Activated T-helper 1 cell treated with anti-CD3 and anti-CD28 coated beads, Interleukin-12 subunit alpha, Interleukin-12 subunit beta, Interleukin-2, Interleukin-4 antibody, amounts not matched to agents 30 ng/mL and 10 ng/mL and 1 ng/mL, durations not matched to agents 14 hours and 24 hours and 36 hours (primary cell): ENCODE measurements at regions of chr18 and their contacts with region 1.

Region 1: DNA sequence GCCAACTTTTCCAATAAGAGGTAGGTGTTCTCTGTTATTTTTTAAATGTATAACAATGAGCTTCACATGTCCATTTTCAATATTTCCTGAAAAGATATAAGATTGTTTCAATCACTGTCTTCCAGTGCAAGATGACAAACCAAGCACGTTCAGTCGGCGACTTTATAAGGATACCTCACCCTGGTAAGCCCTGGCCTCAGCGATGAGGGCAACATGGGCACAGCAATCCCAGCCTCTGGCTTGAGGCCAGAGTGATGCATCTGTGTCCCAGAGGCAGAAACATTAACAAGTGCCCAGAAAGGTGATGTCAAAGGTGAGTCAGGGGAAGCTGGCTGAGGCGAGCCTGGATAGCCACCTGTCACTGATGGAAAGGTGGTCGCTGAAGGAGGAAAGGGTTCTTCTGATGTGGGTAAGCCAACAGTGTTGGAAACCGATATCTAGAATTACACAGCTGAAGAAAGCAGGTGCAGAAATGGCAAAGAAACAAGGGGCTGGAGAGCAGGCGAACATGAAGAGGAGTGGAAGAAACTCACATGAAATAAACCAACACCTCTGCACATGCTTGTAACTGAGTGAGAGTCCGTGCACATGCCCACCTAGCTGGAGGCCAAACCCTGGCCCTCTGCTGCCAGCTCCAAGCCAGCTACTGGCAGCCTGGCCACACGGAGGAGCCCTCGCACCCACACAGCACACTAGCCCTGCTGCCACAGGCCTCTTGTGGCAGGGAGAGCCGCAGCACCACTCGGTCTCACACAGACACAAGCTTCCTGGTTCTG is 65.5 kb downstream of the FBXO15 start:
- DNase-seq: peak; percentile 63
- H3K4me3 Mint-ChIP-seq: peak overlapping the region; percentile 85
- H3K27ac Mint-ChIP-seq: peak overlapping the region; percentile 97
- H3K4me1 Mint-ChIP-seq: peaks cover 24% of the 10 kb centered on the region
- H3K27me3 Mint-ChIP-seq: peaks cover 5% of the 10 kb centered on the region

Region 2: GRCh38 chr18:74040459-74041332 is 41.5 kb before region 1 on chr18:
- intact Hi-C with region 1: loop called (anchors 1 kb)
- DNase-seq: peak; percentile 62
- H3K4me3 Mint-ChIP-seq: no peak overlapping the region
- H3K27ac Mint-ChIP-seq: no peak overlapping the region
- H3K4me1 Mint-ChIP-seq: no peaks in the 10 kb centered on the region
- H3K27me3 Mint-ChIP-seq: no peaks in the 10 kb centered on the region

Region 3: DNA sequence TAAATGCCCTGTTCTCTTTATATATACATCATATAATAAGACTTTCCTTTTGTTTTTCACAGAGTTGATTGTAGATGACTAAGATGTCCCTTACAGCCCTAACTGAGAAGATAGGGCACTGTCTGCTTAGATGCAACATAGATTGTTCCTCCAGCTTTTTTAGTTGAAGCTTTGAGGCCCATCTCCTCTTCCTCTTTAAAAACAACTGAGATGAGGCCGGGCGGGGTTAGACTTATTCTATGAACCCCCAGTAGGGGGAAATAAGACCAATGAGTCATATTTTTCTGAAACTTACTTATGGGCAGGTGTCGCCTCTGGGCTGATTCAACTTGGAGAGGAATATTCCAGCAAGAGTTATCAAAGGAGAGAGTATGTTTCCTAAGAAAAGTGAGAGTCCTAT is 19.1 kb before region 1 on chr18:
- intact Hi-C with region 1: loop called (anchors 1 kb)
- DNase-seq: no peak
- H3K4me3 Mint-ChIP-seq: peak overlapping the region; percentile 19
- H3K27ac Mint-ChIP-seq: peak overlapping the region; percentile 77
- H3K4me1 Mint-ChIP-seq: peaks cover 50% of the 10 kb centered on the region
- H3K27me3 Mint-ChIP-seq: no peaks in the 10 kb centered on the region

Region 4: GRCh38 chr18:74097598-74098202 is 15.5 kb after region 1 on chr18:
- intact Hi-C with region 1: no loop called
- DNase-seq: no peak
- H3K4me3 Mint-ChIP-seq: no peak overlapping the region
- H3K27ac Mint-ChIP-seq: no peak overlapping the region
- H3K4me1 Mint-ChIP-seq: peaks cover 5% of the 10 kb centered on the region
- H3K27me3 Mint-ChIP-seq: peaks cover 2% of the 10 kb centered on the region

Region 5: GRCh38 chr18:74116633-74117554 is 34.7 kb after region 1 on chr18:
- intact Hi-C with region 1: loop called (anchors 1 kb)
- DNase-seq: no peak
- H3K4me3 Mint-ChIP-seq: no peak overlapping the region
- H3K27ac Mint-ChIP-seq: no peak overlapping the region
- H3K4me1 Mint-ChIP-seq: peaks cover 8% of the 10 kb centered on the region
- H3K27me3 Mint-ChIP-seq: peaks cover 2% of the 10 kb centered on the region

Region 6: GRCh38 chr18:74139888-74140287 is 57.7 kb after region 1 on chr18:
- intact Hi-C with region 1: loop called (anchors 1 kb)
- DNase-seq: no peak
- H3K4me3 Mint-ChIP-seq: peak overlapping the region; percentile 59
- H3K27ac Mint-ChIP-seq: peak overlapping the region; percentile 93
- H3K4me1 Mint-ChIP-seq: peaks cover 44% of the 10 kb centered on the region
- H3K27me3 Mint-ChIP-seq: peaks cover 5% of the 10 kb centered on the region

Region 7: GRCh38 chr18:74255131-74255616 is 173.0 kb after region 1 on chr18:
- intact Hi-C with region 1: no loop called
- DNase-seq: no peak
- H3K4me3 Mint-ChIP-seq: no peak overlapping the region
- H3K27ac Mint-ChIP-seq: no peak overlapping the region
- H3K4me1 Mint-ChIP-seq: peaks cover 7% of the 10 kb centered on the region
- H3K27me3 Mint-ChIP-seq: no peaks in the 10 kb centered on the region

Region 8: DNA sequence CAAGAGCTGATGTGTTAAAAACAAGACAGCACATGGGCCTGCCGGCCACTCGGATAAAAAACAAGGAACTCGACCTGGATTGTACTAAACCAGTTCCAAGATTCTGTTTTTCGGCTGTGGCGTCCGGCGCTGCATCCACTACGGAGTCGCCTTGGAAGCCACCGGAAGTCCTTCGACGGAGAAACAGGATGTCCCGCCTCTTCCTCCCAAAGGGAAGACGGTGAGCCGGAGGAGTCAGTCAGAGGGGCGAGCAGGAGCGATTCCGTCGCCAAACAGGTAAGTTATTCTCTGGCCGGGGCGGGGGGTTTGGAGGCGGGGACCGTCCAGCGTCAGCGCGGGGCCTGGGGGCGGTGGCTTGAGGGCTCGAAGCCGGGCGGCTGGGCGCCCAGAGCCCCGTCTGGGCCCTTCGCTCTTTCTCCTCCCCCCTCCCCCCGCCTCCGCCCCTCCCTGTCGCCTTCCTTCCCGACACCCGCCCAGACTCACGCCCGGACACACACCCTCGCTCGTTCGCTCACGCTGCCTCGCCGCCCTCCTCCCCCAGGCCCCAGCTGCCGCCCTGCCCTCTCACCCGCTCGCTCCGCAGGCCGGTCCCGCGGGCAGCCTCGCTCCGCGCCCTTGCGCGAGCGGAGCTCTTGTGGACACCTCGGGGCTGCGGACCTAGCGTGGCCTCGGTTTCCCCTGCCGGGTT is 515.7 kb after region 1 on chr18 and contains the start of gene ZNF407:
- intact Hi-C with region 1: loop called (anchors 10 kb)
- DNase-seq: peak; percentile 83
- H3K4me3 Mint-ChIP-seq: peak within 1 kb of the TSS; percentile 97
- H3K27ac Mint-ChIP-seq: peak within 1 kb of the TSS; percentile 96
- H3K4me1 Mint-ChIP-seq: peaks cover 45% of the 10 kb centered on the region
- H3K27me3 Mint-ChIP-seq: no peaks in the 10 kb centered on the region
- total RNA-seq, gene ZNF407: 19.8 and 21.4 TPM in 2 replicates

Region 9: DNA sequence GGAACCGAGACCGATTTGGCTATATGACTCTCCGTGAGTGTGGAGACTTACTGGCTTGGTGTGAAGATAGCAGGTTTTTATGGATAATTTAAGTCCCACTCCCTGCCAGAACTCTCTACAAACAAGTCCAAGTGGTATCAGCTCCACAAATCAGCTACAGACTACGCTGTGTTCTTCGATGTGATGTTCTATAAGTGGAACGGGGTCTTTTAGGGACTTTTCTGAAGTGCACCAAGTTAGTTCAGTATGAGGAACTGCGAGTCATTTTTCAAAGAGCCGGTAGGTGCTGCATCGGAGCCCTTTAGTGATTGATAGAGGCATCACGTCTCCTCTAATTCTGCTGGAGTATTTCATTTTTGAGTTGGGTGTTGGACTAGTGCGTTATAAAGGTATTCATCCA is 1235.5 kb after region 1 on chr18:
- intact Hi-C with region 1: no loop called
- DNase-seq: no peak
- H3K4me3 Mint-ChIP-seq: no peak overlapping the region
- H3K27ac Mint-ChIP-seq: no peak overlapping the region
- H3K4me1 Mint-ChIP-seq: no peaks in the 10 kb centered on the region
- H3K27me3 Mint-ChIP-seq: peaks cover 1% of the 10 kb centered on the region